ENCODE measurements at regions of chr4 and their contacts with region 1.

Region 1: GRCh38 chr4:25767877-25768725 is 94.7 kb downstream of the SEL1L3 start:
- DNase-seq: peak; percentile 82
- H3K4me3 ChIP-seq: no peak overlapping the region
- H3K27ac ChIP-seq: no peak overlapping the region
- H3K4me1 ChIP-seq: no peaks in the 10 kb centered on the region
- H3K27me3 ChIP-seq: no peaks in the 10 kb centered on the region

Region 2: GRCh38 chr4:25439918-25440477 is 328.1 kb before region 1 on chr4:
- in situ Hi-C with region 1: loop called (anchors 10 kb)
- DNase-seq: peak; percentile 71
- H3K4me3 ChIP-seq: no peak overlapping the region
- H3K27ac ChIP-seq: no peak overlapping the region
- H3K4me1 ChIP-seq: no peaks in the 10 kb centered on the region
- H3K27me3 ChIP-seq: no peaks in the 10 kb centered on the region

Measured in GM23248 (cell line).